GM12878 (cell line): ENCODE measurements at regions of chr1 and their contacts with region 1.

Region 1: DNA sequence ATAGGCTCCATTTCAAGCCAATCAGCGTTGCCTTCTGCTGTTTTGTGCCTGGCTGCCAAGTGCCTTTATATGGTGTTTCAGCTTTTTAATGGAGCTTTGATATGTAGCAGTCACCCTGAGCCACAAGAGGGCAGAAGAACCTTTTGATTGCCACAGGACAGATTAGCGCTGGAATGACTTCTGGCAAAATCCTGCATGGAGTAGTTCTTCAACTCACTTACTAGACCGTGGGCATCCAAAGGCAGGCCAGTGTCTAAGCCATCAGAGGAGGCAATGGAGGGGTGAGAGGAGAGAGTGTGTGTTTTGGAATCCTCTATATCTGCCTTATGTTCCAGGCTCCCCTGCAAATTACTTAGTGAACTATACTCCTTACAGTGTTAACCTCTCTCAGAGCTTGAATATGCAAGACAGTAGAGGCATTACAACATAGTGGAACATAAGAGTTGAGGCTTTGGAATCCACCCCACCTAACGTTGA is 56.2 kb downstream of the ST3GAL3 start:
- DNase-seq: peak; percentile 72
- ATAC-seq: peak; percentile 87
- H3K4me3 ChIP-seq: no peak overlapping the region
- H3K27ac ChIP-seq: no peak overlapping the region
- H3K4me1 ChIP-seq: peaks cover 18% of the 10 kb centered on the region
- H3K27me3 ChIP-seq: no peaks in the 10 kb centered on the region
- CTCF ChIP-seq: peak; percentile 83 to 98 (median 92)
- EP300 ChIP-seq: no peak
- POLR2A ChIP-seq: no peak
- RAD21 ChIP-seq: peak; percentile 99

Region 2: GRCh38 chr1:43554444-43554992 is 209.0 kb before region 1 on chr1:
- CTCF ChIA-PET with region 1: no interaction called
- POLR2A ChIA-PET with region 1: no interaction called
- RAD21 ChIA-PET with region 1: no interaction called
- SMC1A ChIA-PET with region 1: no interaction called
- in situ Hi-C with region 1: no loop called
- intact Hi-C with region 1: no loop called
- DNase-seq: no peak
- ATAC-seq: peak; percentile 73
- H3K4me3 ChIP-seq: no peak overlapping the region
- H3K27ac ChIP-seq: no peak overlapping the region
- H3K4me1 ChIP-seq: no peaks in the 10 kb centered on the region
- H3K27me3 ChIP-seq: no peaks in the 10 kb centered on the region
- CTCF ChIP-seq: peak; percentile 54 to 63 (median 59)
- EP300 ChIP-seq: no peak
- POLR2A ChIP-seq: no peak
- RAD21 ChIP-seq: peak; percentile 30; the same call in 1 of the 2 replicates

Region 3: DNA sequence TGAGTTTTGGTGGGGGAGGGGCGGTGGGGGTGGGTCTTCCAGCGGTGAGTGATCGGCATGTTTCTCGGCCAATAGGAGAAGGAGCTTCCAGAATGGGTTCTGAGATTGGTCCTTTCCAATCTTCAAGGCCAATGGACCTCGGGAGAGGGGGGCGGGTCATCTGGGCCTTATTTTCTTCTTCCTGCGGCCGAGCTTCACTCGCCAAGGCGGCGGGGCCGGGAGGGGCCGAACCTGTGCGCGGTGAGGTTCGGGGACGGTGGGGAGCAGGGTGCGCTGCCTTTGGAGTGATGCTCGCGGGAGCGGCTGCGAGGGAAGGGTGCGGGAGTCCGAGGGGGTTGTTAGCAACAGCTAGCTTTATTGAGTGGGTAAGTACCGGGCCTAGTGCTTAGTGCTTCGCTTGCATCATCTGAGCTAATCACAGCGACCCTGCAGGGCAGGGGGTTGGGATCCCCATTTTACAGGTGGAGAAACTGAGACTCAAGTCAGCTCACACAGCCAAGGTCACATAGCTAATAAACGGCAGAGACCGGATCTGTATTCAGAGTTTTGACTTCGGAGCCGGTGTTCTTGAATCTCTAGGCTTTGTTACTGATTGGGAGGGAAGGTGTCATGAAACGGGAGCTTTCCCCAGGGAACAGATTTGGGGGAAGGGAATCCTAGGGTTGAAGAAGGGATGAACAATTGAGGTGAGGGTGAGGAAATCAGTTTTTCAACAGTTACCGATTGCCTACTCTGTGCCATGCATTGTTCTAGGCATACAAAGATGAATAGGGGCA is 113.0 kb before region 1 on chr1:
- CTCF ChIA-PET with region 1: interaction called, 70 read pairs
- POLR2A ChIA-PET with region 1: interaction called, 8 read pairs
- RAD21 ChIA-PET with region 1: interaction called, 96 read pairs
- SMC1A ChIA-PET with region 1: interaction called, 32 read pairs
- in situ Hi-C with region 1: no loop called
- intact Hi-C with region 1: no loop called
- DNase-seq: peak; percentile 83
- ATAC-seq: peak; percentile 87
- H3K4me3 ChIP-seq: peak overlapping the region; percentile 98
- H3K27ac ChIP-seq: peak overlapping the region; percentile 85
- H3K4me1 ChIP-seq: peaks cover 10% of the 10 kb centered on the region
- H3K27me3 ChIP-seq: no peaks in the 10 kb centered on the region
- CTCF ChIP-seq: no peak
- EP300 ChIP-seq: no peak
- POLR2A ChIP-seq: peak; percentile 100
- RAD21 ChIP-seq: no peak

Region 4: DNA sequence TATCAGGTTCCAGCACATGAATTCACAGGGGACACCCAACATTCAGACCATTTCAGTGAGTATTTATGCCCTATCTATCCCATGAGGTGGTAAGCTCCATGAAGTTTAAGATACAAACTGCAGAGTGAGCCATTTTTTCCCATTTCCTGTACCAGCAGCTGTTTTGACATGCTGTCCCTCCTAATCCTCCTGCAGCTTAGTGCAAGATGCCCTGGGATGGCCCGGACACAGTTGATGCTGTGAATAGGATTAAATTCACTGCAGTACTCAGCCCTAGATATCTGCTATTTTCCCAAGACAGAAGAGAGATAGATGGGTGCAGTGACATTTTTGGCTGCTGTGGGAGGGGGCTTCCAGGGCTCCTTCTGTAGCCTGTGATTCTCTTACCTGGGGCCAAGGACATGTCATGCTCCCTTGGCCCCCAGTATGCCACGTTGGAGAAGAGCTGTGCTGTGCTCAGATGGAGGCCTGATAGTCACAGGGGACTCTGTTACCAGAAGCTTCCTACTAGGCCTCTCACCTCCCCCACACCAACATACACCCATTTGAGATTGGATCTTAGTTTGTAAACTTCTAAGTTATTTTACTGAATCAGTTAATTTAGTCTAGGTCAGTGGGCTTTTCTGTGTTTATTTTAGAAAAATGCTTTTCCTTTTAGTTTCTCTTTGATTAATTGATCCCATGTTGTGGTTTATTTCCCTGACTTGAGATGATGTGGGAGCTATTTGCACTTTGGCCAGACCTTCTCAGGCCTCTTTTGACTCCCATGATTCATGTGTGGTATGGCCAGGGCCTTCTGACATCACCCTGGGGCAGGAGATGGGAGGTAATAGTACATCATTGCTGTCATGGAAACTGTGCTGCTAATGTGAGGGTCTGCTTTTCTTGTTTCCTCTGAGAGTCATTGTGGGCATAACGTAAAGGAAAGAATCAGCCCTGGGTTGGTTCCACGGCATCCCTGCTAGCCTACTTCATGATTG is 36.4 kb after region 1 on chr1:
- CTCF ChIA-PET with region 1: interaction called, 4 read pairs
- POLR2A ChIA-PET with region 1: no interaction called
- RAD21 ChIA-PET with region 1: interaction called, 10 read pairs
- SMC1A ChIA-PET with region 1: interaction called, 6 read pairs
- in situ Hi-C with region 1: no loop called
- intact Hi-C with region 1: no loop called
- DNase-seq: no peak
- ATAC-seq: peak; percentile 25; the same call in 1 of the 3 replicates
- H3K4me3 ChIP-seq: no peak overlapping the region
- H3K27ac ChIP-seq: no peak overlapping the region
- H3K4me1 ChIP-seq: no peaks in the 10 kb centered on the region
- H3K27me3 ChIP-seq: no peaks in the 10 kb centered on the region
- CTCF ChIP-seq: no peak
- EP300 ChIP-seq: no peak
- POLR2A ChIP-seq: no peak
- RAD21 ChIP-seq: no peak

Region 5: DNA sequence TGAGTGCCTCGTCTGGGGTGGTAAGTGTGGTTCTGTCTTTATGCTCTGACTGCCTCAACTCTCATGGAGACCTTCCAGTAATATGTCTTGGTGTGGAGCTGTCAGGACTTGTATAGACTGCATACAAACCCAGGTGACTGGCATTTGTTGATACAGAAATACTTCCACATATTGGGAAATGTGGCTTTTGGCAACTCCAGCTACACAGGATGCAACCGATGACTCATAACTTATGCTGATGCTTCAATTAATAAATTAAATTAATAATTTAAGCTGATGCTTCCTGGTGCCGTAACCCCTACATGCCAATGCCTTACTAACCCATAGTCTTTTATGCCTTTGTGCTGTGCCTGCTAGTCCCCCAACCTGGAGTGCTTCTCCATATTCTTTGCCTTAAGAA is 97.8 kb after region 1 on chr1:
- CTCF ChIA-PET with region 1: interaction called, 20 read pairs
- POLR2A ChIA-PET with region 1: interaction called, 3 read pairs
- RAD21 ChIA-PET with region 1: interaction called, 8 read pairs
- SMC1A ChIA-PET with region 1: interaction called, 11 read pairs
- in situ Hi-C with region 1: no loop called
- intact Hi-C with region 1: no loop called
- DNase-seq: no peak
- ATAC-seq: no peak
- H3K4me3 ChIP-seq: no peak overlapping the region
- H3K27ac ChIP-seq: no peak overlapping the region
- H3K4me1 ChIP-seq: peaks cover 11% of the 10 kb centered on the region; the same call in 1 of the 2 replicates
- H3K27me3 ChIP-seq: no peaks in the 10 kb centered on the region
- CTCF ChIP-seq: no peak
- EP300 ChIP-seq: no peak
- POLR2A ChIP-seq: no peak
- RAD21 ChIP-seq: no peak

Region 6: GRCh38 chr1:43924516-43924915 is 161.0 kb after region 1 on chr1:
- CTCF ChIA-PET with region 1: interaction called, 1,117 read pairs
- POLR2A ChIA-PET with region 1: interaction called, 4 read pairs
- RAD21 ChIA-PET with region 1: interaction called, 587 read pairs
- SMC1A ChIA-PET with region 1: interaction called, 65 read pairs
- in situ Hi-C with region 1: no loop called
- intact Hi-C with region 1: no loop called
- DNase-seq: no peak
- ATAC-seq: no peak
- H3K4me3 ChIP-seq: no peak overlapping the region
- H3K27ac ChIP-seq: no peak overlapping the region
- H3K4me1 ChIP-seq: no peaks in the 10 kb centered on the region
- H3K27me3 ChIP-seq: no peaks in the 10 kb centered on the region
- CTCF ChIP-seq: no peak
- EP300 ChIP-seq: no peak
- POLR2A ChIP-seq: no peak
- RAD21 ChIP-seq: no peak

Region 7: GRCh38 chr1:43991476-43992231 is 228.1 kb after region 1 on chr1 and contains the start of gene CCDC24:
- CTCF ChIA-PET with region 1: interaction called, 12 read pairs
- POLR2A ChIA-PET with region 1: no interaction called
- RAD21 ChIA-PET with region 1: interaction called, 7 read pairs
- SMC1A ChIA-PET with region 1: interaction called, 7 read pairs
- in situ Hi-C with region 1: no loop called
- intact Hi-C with region 1: no loop called
- DNase-seq: no peak
- ATAC-seq: peak; percentile 90
- H3K4me3 ChIP-seq: peak within 1 kb of the TSS; percentile 72
- H3K27ac ChIP-seq: peak within 1 kb of the TSS; percentile 42; the same call in 1 of the 2 replicates
- H3K4me1 ChIP-seq: peaks cover 17% of the 10 kb centered on the region
- H3K27me3 ChIP-seq: no peaks in the 10 kb centered on the region
- CTCF ChIP-seq: no peak
- EP300 ChIP-seq: no peak
- POLR2A ChIP-seq: peak; percentile 74
- RAD21 ChIP-seq: no peak
- polyA plus RNA-seq, gene CCDC24: 0.18 TPM in 1 of 2 experiments, not detected in the other

Region 8: GRCh38 chr1:44049839-44050238 is 286.3 kb after region 1 on chr1:
- CTCF ChIA-PET with region 1: interaction called, 36 read pairs
- POLR2A ChIA-PET with region 1: no interaction called
- RAD21 ChIA-PET with region 1: interaction called, 10 read pairs
- SMC1A ChIA-PET with region 1: interaction called, 11 read pairs
- in situ Hi-C with region 1: no loop called
- intact Hi-C with region 1: no loop called
- DNase-seq: no peak
- ATAC-seq: no peak
- H3K4me3 ChIP-seq: no peak overlapping the region
- H3K27ac ChIP-seq: no peak overlapping the region
- H3K4me1 ChIP-seq: no peaks in the 10 kb centered on the region
- H3K27me3 ChIP-seq: no peaks in the 10 kb centered on the region
- CTCF ChIP-seq: no peak
- EP300 ChIP-seq: no peak
- POLR2A ChIP-seq: no peak
- RAD21 ChIP-seq: no peak